PC-3 (cell line): ENCODE measurements at regions of chrX and their contacts with region 1.

Region 1: DNA sequence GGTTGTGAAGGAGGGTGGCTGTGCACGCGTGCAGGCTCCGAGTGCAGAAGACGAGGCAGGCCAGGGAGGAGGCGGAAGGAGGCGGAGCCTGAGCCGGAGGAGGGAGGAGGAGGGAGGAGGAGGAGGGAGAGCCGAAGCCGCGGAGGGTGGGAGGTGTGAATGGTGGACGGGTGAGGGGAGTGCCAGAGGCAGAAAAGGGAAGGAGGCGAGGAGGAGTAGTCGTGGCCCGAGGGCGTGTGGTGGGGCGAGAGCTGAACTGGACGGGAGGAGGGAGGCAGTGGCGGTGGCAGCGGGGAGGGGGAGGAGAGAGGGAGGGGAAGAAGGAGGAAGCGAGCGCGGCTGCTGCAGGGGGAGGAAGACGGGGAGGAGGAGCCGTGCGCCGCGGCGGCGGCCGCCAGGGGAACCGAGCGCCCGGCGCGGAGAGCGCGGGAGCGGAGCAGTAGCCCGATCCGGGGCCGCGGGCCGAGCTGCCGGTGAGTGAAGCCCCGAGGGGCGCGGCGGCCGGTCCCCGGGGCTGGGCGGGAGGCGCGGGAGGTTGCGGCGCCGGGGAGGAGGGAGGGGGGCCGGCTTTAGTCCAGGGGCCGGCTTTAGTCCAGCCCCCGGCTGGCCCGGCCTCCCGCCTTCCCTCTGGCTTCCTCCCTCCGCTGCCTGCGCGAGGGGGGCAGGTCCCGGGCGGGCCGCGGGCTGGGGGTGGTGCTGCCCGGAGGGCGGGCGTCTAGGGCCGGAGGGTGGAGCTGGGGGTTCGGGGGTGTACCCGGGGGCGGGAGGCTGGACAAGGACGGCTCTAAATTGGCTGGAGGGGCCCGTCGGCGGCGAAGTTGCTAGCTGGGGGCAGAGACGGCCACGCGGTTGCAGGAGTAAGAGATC is at the start of gene TMEM164:
- DNase-seq: peak; percentile 71
- ATAC-seq: peak; percentile 76
- H3K4me3 ChIP-seq: peak within 1 kb of the TSS; percentile 92
- H3K27ac ChIP-seq: peak within 1 kb of the TSS; percentile 23
- H3K4me1 ChIP-seq: peaks cover 31% of the 10 kb centered on the region
- H3K27me3 ChIP-seq: no peaks in the 10 kb centered on the region
- CTCF ChIP-seq: no peak
- total RNA-seq, gene TMEM164: 23.7 and 26.6 TPM in 2 replicates

Region 2: GRCh38 chrX:109911046-109911445 is 91.5 kb before region 1 on chrX:
- CTCF ChIA-PET with region 1: no interaction called
- POLR2A ChIA-PET with region 1: no interaction called
- intact Hi-C with region 1: loop called (anchors 5 kb)
- DNase-seq: peak; percentile 35
- ATAC-seq: no peak
- H3K4me3 ChIP-seq: no peak overlapping the region
- H3K27ac ChIP-seq: no peak overlapping the region
- H3K4me1 ChIP-seq: no peaks in the 10 kb centered on the region
- H3K27me3 ChIP-seq: no peaks in the 10 kb centered on the region
- CTCF ChIP-seq: peak; percentile 75

Region 3: DNA sequence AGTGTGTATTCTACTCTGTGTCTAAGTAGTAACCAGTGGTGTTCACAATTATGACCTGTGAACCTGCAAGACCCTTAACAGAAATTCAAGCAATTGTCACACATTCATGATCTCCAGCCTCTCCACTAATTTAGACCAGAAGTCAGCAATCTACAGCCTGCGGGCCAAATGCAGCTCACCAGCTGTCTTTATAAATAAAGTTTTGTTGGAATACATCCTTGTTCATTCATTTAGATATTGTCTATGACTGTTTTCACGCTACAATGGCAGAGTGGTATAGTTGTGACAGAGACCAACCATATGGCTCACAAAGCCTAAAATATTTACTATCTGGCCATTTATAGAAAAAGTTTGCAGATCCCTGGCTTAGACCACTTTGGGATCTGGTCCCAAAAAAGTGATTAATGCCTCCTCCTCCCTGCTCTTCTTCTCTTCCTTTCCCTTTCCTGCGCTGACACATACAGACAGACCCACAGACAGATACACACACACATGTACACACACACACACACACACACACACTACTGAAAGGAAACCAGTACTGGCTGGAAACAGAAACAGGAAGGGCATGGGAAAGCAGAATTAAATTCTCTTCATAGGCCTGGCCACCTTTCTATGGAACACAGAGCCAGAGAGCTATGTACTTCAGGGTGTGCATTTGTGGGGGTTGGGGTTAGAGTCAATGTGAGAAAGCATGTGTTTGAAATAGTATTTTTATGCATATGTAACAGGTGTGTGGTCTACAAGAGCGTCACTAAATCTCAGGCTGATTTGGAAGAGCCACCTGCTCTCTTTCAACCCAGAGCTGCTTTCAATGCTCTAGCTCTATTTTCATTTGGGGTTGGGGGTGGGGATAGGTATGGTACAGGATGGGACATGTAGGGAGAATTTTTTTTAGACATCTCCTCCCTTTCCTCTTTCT is 49.3 kb before region 1 on chrX:
- CTCF ChIA-PET with region 1: no interaction called
- POLR2A ChIA-PET with region 1: no interaction called
- intact Hi-C with region 1: no loop called
- DNase-seq: no peak
- ATAC-seq: no peak
- H3K4me3 ChIP-seq: no peak overlapping the region
- H3K27ac ChIP-seq: no peak overlapping the region
- H3K4me1 ChIP-seq: peaks cover 32% of the 10 kb centered on the region
- H3K27me3 ChIP-seq: no peaks in the 10 kb centered on the region
- CTCF ChIP-seq: no peak

Region 4: GRCh38 chrX:110021180-110022022 is 18.9 kb after region 1 on chrX:
- CTCF ChIA-PET with region 1: interaction called, 5 read pairs
- POLR2A ChIA-PET with region 1: no interaction called
- intact Hi-C with region 1: loop called (anchors 2 kb)
- DNase-seq: no peak
- ATAC-seq: no peak
- H3K4me3 ChIP-seq: no peak overlapping the region
- H3K27ac ChIP-seq: no peak overlapping the region
- H3K4me1 ChIP-seq: peaks cover 15% of the 10 kb centered on the region
- H3K27me3 ChIP-seq: no peaks in the 10 kb centered on the region
- CTCF ChIP-seq: no peak

Region 5: GRCh38 chrX:110086916-110087484 is 84.5 kb after region 1 on chrX:
- CTCF ChIA-PET with region 1: no interaction called
- POLR2A ChIA-PET with region 1: no interaction called
- intact Hi-C with region 1: loop called (anchors 1 kb)
- DNase-seq: peak; percentile 90
- ATAC-seq: peak; percentile 70
- H3K4me3 ChIP-seq: peak overlapping the region; percentile 59; the same call in 1 of the 2 replicates
- H3K27ac ChIP-seq: peak overlapping the region; percentile 100
- H3K4me1 ChIP-seq: peaks cover 45% of the 10 kb centered on the region
- H3K27me3 ChIP-seq: no peaks in the 10 kb centered on the region
- CTCF ChIP-seq: no peak

Region 6: GRCh38 chrX:110108381-110108821 is 105.9 kb after region 1 on chrX:
- CTCF ChIA-PET with region 1: no interaction called
- POLR2A ChIA-PET with region 1: interaction called, 13 read pairs
- intact Hi-C with region 1: no loop called
- DNase-seq: no peak
- ATAC-seq: no peak
- H3K4me3 ChIP-seq: no peak overlapping the region
- H3K27ac ChIP-seq: no peak overlapping the region
- H3K4me1 ChIP-seq: no peaks in the 10 kb centered on the region
- H3K27me3 ChIP-seq: no peaks in the 10 kb centered on the region
- CTCF ChIP-seq: no peak

Region 7: GRCh38 chrX:110146521-110146920 is 144.0 kb after region 1 on chrX:
- CTCF ChIA-PET with region 1: no interaction called
- POLR2A ChIA-PET with region 1: no interaction called
- intact Hi-C with region 1: loop called (anchors 1 kb)
- DNase-seq: peak; percentile 72
- ATAC-seq: peak; percentile 82
- H3K4me3 ChIP-seq: no peak overlapping the region
- H3K27ac ChIP-seq: no peak overlapping the region
- H3K4me1 ChIP-seq: no peaks in the 10 kb centered on the region
- H3K27me3 ChIP-seq: no peaks in the 10 kb centered on the region
- CTCF ChIP-seq: peak; percentile 74

Region 8: GRCh38 chrX:110412971-110413721 is 410.6 kb after region 1 on chrX:
- CTCF ChIA-PET with region 1: no interaction called
- POLR2A ChIA-PET with region 1: no interaction called
- intact Hi-C with region 1: loop called (anchors 10 kb)
- DNase-seq: peak; percentile 82
- ATAC-seq: peak; percentile 64
- H3K4me3 ChIP-seq: peak overlapping the region; percentile 28
- H3K27ac ChIP-seq: no peak overlapping the region
- H3K4me1 ChIP-seq: peaks cover 65% of the 10 kb centered on the region
- H3K27me3 ChIP-seq: no peaks in the 10 kb centered on the region
- CTCF ChIP-seq: peak; percentile 89